ENCODE measurements at regions of chr11 and their contacts with region 1.

Region 1: GRCh38 chr11:105106140-105106539 is 33.4 kb downstream of the CARD18 start:
- DNase-seq: no peak
- ATAC-seq: no peak
- H3K4me3 ChIP-seq: no peak overlapping the region
- H3K27ac ChIP-seq: no peak overlapping the region
- H3K4me1 ChIP-seq: peaks cover 0 to 18% (median 0%) of the 10 kb centered on the region in 12 donors
- H3K27me3 ChIP-seq: no peaks in the 10 kb centered on the region
- CTCF ChIP-seq: no peak
- POLR2A ChIP-seq: no peak

Region 2: DNA sequence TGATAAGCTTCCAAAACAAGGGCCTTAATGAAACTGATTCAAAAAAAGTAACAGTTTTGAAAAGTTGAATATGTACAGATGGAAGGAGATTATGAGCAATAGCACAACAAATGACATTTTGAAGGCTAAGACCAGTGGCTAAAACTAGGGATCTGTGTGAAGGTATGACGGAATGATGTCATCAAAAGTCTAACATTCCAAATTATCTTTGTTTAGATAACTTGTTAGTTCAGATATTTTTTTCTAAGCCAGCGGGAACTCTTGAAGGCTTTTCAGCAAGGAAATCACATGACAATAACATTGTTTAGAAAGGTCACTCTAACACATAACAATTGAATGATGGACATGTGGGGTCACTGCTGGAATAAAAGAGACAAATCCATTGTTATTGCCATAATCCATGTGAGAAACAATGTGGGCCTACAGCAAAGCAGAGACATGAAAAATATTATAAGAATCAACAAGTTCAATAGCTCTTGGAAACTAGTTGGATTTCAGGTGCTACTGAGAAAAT is 468.4 kb before region 1 on chr11:
- intact Hi-C with region 1: no loop called
- DNase-seq: no peak
- ATAC-seq: no peak
- H3K4me3 ChIP-seq: no peak overlapping the region
- H3K27ac ChIP-seq: no peak overlapping the region
- H3K4me1 ChIP-seq: peaks cover 0 to 5% (median 0%) of the 10 kb centered on the region in 12 donors
- H3K27me3 ChIP-seq: no peaks in the 10 kb centered on the region
- CTCF ChIP-seq: no peak
- POLR2A ChIP-seq: no peak

Region 3: DNA sequence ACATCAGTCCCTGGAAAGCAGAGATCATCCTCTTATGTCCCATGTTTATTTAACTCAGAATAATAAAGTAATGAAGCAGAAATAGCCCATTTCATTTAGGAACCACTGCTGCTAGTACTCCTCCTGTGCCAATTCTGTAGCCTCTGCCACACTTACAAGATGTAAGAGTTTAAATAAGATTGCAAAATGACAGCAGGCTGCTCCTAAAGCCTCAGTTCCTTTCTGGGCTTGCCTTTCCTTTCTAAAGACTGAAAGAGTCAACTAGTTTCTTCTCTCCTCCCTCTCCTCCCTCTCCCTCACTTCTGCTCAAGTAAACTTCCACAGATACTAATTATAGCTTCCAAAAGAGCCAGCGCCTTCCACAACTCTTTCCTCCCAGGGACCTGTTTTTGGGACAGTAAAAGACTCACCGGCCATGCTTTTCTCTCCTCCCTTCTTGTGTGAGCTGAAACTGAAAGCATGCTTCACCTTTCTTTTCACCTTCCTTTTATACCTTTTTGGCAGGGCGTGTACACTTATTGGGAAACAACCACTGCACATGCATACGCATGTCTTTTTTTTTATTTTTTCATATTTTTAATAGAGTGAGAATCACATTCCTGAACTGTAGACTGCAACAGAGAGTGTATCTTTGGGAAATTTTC is 34.9 kb before region 1 on chr11:
- intact Hi-C with region 1: loop called in 1 of 10 experiments (anchors 2 kb)
- DNase-seq: no peak
- ATAC-seq: no peak
- H3K4me3 ChIP-seq: peak overlapping the region in 1 of 12 donors; percentile 5
- H3K27ac ChIP-seq: peak overlapping the region in 1 of 12 donors; percentile 20
- H3K4me1 ChIP-seq: peaks cover 0 to 6% (median 0%) of the 10 kb centered on the region in 12 donors
- H3K27me3 ChIP-seq: no peaks in the 10 kb centered on the region
- CTCF ChIP-seq: no peak
- POLR2A ChIP-seq: no peak

Region 4: GRCh38 chr11:105202844-105203548 is 96.9 kb after region 1 on chr11:
- intact Hi-C with region 1: no loop called
- DNase-seq: no peak
- ATAC-seq: no peak
- H3K4me3 ChIP-seq: no peak overlapping the region
- H3K27ac ChIP-seq: no peak overlapping the region
- H3K4me1 ChIP-seq: peaks cover 0 to 4% (median 0%) of the 10 kb centered on the region in 12 donors
- H3K27me3 ChIP-seq: no peaks in the 10 kb centered on the region
- CTCF ChIP-seq: no peak
- POLR2A ChIP-seq: no peak